HCT116 (cell line): ENCODE measurements at regions of chr5 and their contacts with region 1.

Region 1: GRCh38 chr5:116137544-116138378 is 52.9 kb downstream of the COMMD10 start:
- DNase-seq: peak; percentile 41
- ATAC-seq: peak; percentile 66
- H3K4me3 ChIP-seq: no peak overlapping the region
- H3K27ac ChIP-seq: no peak overlapping the region
- H3K4me1 ChIP-seq: no peaks in the 10 kb centered on the region
- H3K27me3 ChIP-seq: no peaks in the 10 kb centered on the region
- CTCF ChIP-seq: peak; percentile 44 to 84 (median 68); a peak in 5 of 6 replicates
- POLR2A ChIP-seq: no peak
- RAD21 ChIP-seq: peak; percentile 82

Region 2: GRCh38 chr5:116557669-116558271 is 420.0 kb after region 1 on chr5:
- CTCF ChIA-PET with region 1: no interaction called
- POLR2A ChIA-PET with region 1: no interaction called
- RAD21 ChIA-PET with region 1: no interaction called
- intact Hi-C with region 1: loop called (anchors 2 kb)
- DNase-seq: no peak
- ATAC-seq: peak; percentile 77
- H3K4me3 ChIP-seq: no peak overlapping the region
- H3K27ac ChIP-seq: no peak overlapping the region
- H3K4me1 ChIP-seq: no peaks in the 10 kb centered on the region
- H3K27me3 ChIP-seq: no peaks in the 10 kb centered on the region
- CTCF ChIP-seq: peak; percentile 52 to 73 (median 66); a peak in 4 of 6 replicates
- POLR2A ChIP-seq: no peak
- RAD21 ChIP-seq: peak; percentile 72